Activated CD8-positive, alpha-beta T cell treated with anti-CD3 and anti-CD28 coated beads, Interleukin-2, amount 10 ng/mL, durations not matched to agents 7 days and 5 days (primary cell): ENCODE measurements at regions of chr17 and their contacts with region 1.

Region 1: GRCh38 chr17:42287926-42288802 is at the start of gene STAT5A:
- DNase-seq: peak; percentile 90
- ATAC-seq: peak; percentile 83
- H3K4me3 Mint-ChIP-seq: peak within 1 kb of the TSS; percentile 89
- H3K27ac Mint-ChIP-seq: peak within 1 kb of the TSS; percentile 93
- H3K4me1 Mint-ChIP-seq: peaks cover 52% of the 10 kb centered on the region
- H3K27me3 Mint-ChIP-seq: no peaks in the 10 kb centered on the region
- total RNA-seq, gene STAT5A: 117 to 119 TPM

Region 2: DNA sequence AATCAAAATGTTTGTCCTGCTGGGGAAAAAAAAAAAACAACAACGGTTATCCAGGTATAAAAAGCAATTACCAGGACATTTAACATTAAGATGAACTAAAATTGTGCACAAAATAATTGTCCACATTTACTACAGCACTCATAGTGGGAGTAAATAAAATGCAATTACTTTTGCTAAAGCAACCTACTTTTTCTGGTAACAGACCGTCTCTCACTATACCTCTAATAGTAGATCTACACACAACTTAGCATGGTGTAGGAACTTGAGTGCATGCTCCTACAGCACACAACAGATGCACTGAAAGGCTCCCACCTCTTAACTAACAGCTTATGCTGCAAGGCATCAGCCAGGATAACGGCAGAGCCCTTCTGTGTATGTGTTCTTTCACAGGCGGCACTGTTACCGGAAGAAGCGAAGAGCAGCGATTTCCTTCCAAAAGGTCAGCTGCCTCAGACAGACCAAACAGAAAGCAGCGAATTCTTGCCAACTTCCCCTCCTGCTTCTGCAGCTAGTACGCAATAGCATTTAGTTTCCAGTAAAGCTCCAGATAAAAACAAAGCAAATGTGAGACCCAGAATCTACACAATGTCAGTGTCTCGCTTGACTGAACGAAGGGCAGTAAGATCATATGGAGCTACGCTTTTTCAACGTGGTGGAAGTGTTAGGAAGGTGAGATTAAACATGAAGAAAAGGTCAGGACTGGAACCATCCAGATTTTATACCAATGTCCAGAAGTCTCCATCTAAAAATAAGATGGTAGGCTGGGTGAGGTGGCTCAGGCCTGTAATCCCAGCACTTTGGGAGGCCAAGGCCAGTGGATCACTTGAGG is 39.6 kb before region 1 on chr17:
- CTCF ChIA-PET with region 1: interaction called, 6 read pairs
- POLR2A ChIA-PET with region 1: interaction called, 69 read pairs
- DNase-seq: peak; percentile 88
- ATAC-seq: peak; percentile 93
- H3K4me3 Mint-ChIP-seq: peak overlapping the region; percentile 78
- H3K27ac Mint-ChIP-seq: peak overlapping the region; percentile 90
- H3K4me1 Mint-ChIP-seq: peaks cover 65% of the 10 kb centered on the region
- H3K27me3 Mint-ChIP-seq: no peaks in the 10 kb centered on the region

Region 3: GRCh38 chr17:42266918-42267778 is 21.0 kb before region 1 on chr17:
- CTCF ChIA-PET with region 1: no interaction called
- POLR2A ChIA-PET with region 1: interaction called, 19 read pairs
- DNase-seq: peak; percentile 55
- ATAC-seq: peak; percentile 81
- H3K4me3 Mint-ChIP-seq: no peak overlapping the region
- H3K27ac Mint-ChIP-seq: peak overlapping the region; percentile 73
- H3K4me1 Mint-ChIP-seq: peaks cover 54% of the 10 kb centered on the region
- H3K27me3 Mint-ChIP-seq: no peaks in the 10 kb centered on the region

Region 4: GRCh38 chr17:42276359-42276608 is 11.9 kb before region 1 on chr17 and contains the start of gene STAT5B:
- CTCF ChIA-PET with region 1: interaction called, 3 read pairs
- POLR2A ChIA-PET with region 1: interaction called, 24 read pairs
- DNase-seq: peak; percentile 74
- ATAC-seq: peak; percentile 69
- H3K4me3 Mint-ChIP-seq: peak within 1 kb of the TSS; percentile 93
- H3K27ac Mint-ChIP-seq: peak within 1 kb of the TSS; percentile 86
- H3K4me1 Mint-ChIP-seq: peaks cover 46% of the 10 kb centered on the region
- H3K27me3 Mint-ChIP-seq: no peaks in the 10 kb centered on the region
- total RNA-seq, gene STAT5B: 92.7 to 94.4 TPM

Region 5: GRCh38 chr17:42322382-42323267 is 34.5 kb after region 1 on chr17:
- CTCF ChIA-PET with region 1: no interaction called
- POLR2A ChIA-PET with region 1: no interaction called
- DNase-seq: peak; percentile 98
- ATAC-seq: peak; percentile 93
- H3K4me3 Mint-ChIP-seq: no peak overlapping the region
- H3K27ac Mint-ChIP-seq: peak overlapping the region; percentile 75
- H3K4me1 Mint-ChIP-seq: peaks cover 45% of the 10 kb centered on the region
- H3K27me3 Mint-ChIP-seq: no peaks in the 10 kb centered on the region